ENCODE measurements at regions of chr6 and their contacts with region 1.

Region 1: DNA sequence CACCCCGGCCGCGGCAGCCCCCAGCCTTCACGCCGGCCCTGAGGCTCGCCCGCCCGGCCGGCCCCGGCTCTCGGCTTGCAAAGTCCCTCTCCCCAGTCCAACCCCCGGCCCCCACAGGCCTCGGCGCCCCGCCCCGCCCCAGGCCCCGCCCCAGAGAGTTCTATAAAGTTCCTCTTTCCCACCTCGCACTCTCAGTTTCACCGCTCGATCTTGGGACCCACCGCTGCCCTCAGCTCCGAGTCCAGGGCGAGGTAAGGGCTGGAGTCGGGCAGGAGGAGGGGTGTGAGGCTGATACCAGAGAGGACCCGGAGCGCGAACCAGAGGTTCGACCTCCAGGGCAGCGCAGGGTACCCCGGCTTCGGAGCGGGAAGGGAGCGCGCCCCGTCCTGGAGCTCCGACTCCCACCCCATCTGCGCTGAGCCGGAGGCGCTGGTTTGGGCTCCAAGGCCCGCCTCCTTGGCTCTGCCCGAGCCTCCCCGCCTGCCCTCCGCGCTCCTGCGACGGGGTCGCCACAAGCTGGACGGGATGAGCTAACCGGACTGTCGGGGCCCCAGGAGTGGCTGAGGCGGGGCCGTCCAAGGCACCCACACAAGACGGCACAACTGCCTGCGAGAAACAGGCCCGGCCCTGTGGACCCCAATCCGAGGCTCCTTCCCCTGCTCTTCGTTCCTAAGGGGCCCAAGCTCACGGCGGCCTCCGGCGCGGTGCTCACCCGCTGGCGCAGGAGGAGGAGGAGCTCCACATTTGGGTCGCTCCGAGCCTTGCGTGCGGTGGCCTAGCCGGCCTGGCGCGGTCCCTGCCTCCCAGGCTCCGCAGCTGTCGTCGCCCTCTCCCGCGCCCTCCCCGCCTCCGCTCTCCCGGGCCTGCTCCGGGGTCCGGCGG is at the start of gene IRF4:
- DNase-seq: peak; percentile 87
- ATAC-seq: peak; percentile 52
- H3K4me3 Mint-ChIP-seq: peak within 1 kb of the TSS; percentile 94
- H3K27ac Mint-ChIP-seq: peak within 1 kb of the TSS; percentile 98
- H3K4me1 Mint-ChIP-seq: peaks cover 48% of the 10 kb centered on the region
- H3K27me3 Mint-ChIP-seq: peaks cover 3% of the 10 kb centered on the region
- total RNA-seq, gene IRF4: 601 to 617 TPM

Region 2: DNA sequence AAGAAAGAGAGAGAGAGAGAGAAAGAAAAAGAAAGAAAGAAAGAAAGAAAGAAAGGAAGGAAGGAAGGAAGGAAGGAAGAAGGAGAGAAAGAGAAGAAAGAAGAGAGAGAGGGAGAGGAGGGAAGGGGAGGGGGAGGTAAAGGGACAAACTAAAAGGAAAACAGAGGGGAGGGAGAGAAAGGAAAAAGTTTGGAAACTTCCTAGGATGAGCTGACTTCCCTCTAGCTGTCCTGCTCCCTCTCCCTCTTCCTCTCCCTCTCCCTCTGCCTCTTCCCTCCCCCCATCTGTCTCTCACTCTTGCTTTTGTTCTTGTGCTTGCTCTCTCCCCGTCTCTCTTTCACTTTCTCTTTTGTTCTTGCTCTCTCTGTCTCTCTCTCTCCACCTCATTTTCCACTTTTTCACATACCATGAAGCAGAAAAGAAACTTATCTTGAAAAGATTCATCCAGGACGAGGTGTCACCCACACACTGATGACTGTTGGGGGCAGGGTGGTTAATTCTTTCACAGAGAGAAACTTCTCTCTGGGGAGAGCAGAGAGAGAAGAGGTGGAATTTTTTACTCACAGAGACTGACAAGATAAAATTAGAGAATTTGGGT is 155.9 kb before region 1 on chr6:
- CTCF ChIA-PET with region 1: no interaction called
- POLR2A ChIA-PET with region 1: interaction called, 3 read pairs
- intact Hi-C with region 1: loop called in 1 of 2 experiments (anchors 1 kb)
- DNase-seq: peak; percentile 87
- ATAC-seq: peak; percentile 90
- H3K4me3 Mint-ChIP-seq: peak overlapping the region; percentile 44
- H3K27ac Mint-ChIP-seq: peak overlapping the region; percentile 80
- H3K4me1 Mint-ChIP-seq: peaks cover 51% of the 10 kb centered on the region
- H3K27me3 Mint-ChIP-seq: no peaks in the 10 kb centered on the region

Region 3: DNA sequence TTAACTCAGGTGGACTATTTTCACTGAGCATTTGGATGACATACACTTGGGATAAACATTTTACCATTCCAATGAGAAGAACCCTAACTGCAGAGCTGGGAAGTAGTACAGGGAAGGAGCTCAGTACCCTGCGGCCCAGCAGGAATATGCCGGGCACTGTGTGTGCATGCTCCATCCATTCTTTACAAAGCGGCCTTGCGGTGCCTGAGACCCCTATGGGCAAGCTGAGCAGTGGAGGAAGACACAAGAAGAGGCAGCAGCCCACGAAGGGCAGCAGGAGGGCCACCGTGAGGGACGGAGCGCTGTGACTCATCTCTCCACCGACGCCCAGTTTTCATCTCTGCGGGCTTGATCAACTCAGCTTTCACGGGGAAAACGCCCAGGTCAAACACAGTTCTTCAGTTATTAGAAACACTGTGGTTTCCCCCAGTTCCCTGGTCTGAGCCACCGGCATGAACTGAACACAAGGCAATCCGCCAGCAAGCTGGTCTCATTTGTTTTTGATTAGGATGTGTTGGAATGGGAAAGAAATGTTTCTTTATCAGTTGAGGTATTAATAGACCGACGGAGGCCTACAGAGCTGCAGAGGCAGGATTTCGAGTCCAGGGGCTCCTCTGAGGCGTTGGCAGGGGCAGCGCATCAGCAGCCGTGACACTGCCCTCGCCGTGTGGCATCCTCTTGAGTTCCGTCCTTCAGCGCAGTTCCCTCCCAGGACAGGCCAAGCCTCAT is 44.7 kb after region 1 on chr6:
- CTCF ChIA-PET with region 1: interaction called, 4 read pairs
- POLR2A ChIA-PET with region 1: interaction called, 10 read pairs
- intact Hi-C with region 1: no loop called
- DNase-seq: no peak
- ATAC-seq: no peak
- H3K4me3 Mint-ChIP-seq: no peak overlapping the region
- H3K27ac Mint-ChIP-seq: no peak overlapping the region
- H3K4me1 Mint-ChIP-seq: peaks cover 43% of the 10 kb centered on the region
- H3K27me3 Mint-ChIP-seq: no peaks in the 10 kb centered on the region

Region 4: GRCh38 chr6:490251-491037 is 98.6 kb after region 1 on chr6:
- CTCF ChIA-PET with region 1: interaction called, 12 read pairs
- POLR2A ChIA-PET with region 1: interaction called, 17 read pairs
- intact Hi-C with region 1: loop called in 1 of 2 experiments (anchors 2 kb)
- DNase-seq: peak; percentile 71
- ATAC-seq: peak; percentile 62
- H3K4me3 Mint-ChIP-seq: peak overlapping the region; percentile 58
- H3K27ac Mint-ChIP-seq: peak overlapping the region; percentile 97
- H3K4me1 Mint-ChIP-seq: peaks cover 95% of the 10 kb centered on the region
- H3K27me3 Mint-ChIP-seq: no peaks in the 10 kb centered on the region

Region 5: GRCh38 chr6:558089-558488 is 166.3 kb after region 1 on chr6:
- CTCF ChIA-PET with region 1: interaction called, 6 read pairs
- POLR2A ChIA-PET with region 1: interaction called, 10 read pairs
- intact Hi-C with region 1: loop called (anchors 2 kb)
- DNase-seq: no peak
- ATAC-seq: no peak
- H3K4me3 Mint-ChIP-seq: peak overlapping the region; percentile 15
- H3K27ac Mint-ChIP-seq: peak overlapping the region; percentile 90
- H3K4me1 Mint-ChIP-seq: peaks cover 63% of the 10 kb centered on the region
- H3K27me3 Mint-ChIP-seq: no peaks in the 10 kb centered on the region

Region 6: GRCh38 chr6:1144842-1145767 is 753.3 kb after region 1 on chr6:
- CTCF ChIA-PET with region 1: no interaction called
- POLR2A ChIA-PET with region 1: no interaction called
- intact Hi-C with region 1: no loop called
- DNase-seq: no peak
- ATAC-seq: no peak
- H3K4me3 Mint-ChIP-seq: no peak overlapping the region
- H3K27ac Mint-ChIP-seq: no peak overlapping the region
- H3K4me1 Mint-ChIP-seq: no peaks in the 10 kb centered on the region
- H3K27me3 Mint-ChIP-seq: peaks cover 18% of the 10 kb centered on the region

Region 7: DNA sequence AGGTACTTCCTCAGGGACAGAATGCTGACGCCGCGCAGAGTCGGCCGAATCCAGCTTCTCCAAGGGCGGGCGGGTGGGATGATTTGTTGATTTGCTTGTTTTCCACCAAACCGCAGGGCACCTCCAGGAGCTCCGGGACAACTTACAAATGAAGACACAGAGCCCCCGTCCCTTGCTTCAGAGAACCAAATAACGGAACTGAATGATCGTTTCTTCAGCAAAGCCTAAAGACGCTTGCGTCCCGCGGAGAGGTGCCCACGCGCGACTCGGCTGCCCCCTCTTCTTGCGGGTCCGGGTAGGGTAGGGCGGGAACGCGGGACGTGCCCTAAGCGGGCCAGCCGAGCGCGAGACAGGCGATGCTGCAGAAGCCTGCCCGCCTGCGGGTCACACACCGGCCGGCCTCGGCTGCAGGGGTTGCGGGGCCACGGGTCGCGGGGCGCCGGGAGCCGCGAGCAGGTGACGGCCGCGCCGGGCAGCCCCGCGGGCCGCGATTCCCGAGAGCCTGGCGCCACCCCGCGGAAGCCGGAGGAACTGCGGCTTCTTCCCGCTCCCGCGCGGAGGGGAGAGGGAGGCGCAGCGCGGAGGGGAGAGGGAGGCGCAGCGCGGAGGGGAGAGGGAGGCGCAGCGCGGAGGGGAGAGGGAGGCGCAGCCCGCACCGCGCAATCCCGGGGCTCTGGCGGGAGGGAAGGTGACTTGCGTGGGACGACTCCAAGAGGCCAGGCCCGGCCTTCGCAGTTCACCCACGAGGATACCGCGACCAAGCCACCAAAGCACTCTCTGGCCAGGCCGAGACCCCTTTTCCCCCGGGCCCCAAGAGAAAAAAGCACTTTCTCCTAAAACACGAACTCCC is 989.9 kb after region 1 on chr6:
- CTCF ChIA-PET with region 1: interaction called, 3 read pairs
- POLR2A ChIA-PET with region 1: no interaction called
- intact Hi-C with region 1: loop called in 1 of 2 experiments (anchors 5 kb)
- DNase-seq: peak; percentile 77
- ATAC-seq: peak; percentile 75
- H3K4me3 Mint-ChIP-seq: peak overlapping the region; percentile 10
- H3K27ac Mint-ChIP-seq: no peak overlapping the region
- H3K4me1 Mint-ChIP-seq: peaks cover 38% of the 10 kb centered on the region
- H3K27me3 Mint-ChIP-seq: peaks cover 68% of the 10 kb centered on the region

Measured in activated CD4-positive, alpha-beta T cell treated with anti-CD3 and anti-CD28 coated beads for 36 hours (primary cell).